Activated naive CD4-positive, alpha-beta T cell treated with anti-CD3 and anti-CD28 coated beads for 36 hours (primary cell): ENCODE measurements at regions of chr6 and their contacts with region 1.

Region 1: DNA sequence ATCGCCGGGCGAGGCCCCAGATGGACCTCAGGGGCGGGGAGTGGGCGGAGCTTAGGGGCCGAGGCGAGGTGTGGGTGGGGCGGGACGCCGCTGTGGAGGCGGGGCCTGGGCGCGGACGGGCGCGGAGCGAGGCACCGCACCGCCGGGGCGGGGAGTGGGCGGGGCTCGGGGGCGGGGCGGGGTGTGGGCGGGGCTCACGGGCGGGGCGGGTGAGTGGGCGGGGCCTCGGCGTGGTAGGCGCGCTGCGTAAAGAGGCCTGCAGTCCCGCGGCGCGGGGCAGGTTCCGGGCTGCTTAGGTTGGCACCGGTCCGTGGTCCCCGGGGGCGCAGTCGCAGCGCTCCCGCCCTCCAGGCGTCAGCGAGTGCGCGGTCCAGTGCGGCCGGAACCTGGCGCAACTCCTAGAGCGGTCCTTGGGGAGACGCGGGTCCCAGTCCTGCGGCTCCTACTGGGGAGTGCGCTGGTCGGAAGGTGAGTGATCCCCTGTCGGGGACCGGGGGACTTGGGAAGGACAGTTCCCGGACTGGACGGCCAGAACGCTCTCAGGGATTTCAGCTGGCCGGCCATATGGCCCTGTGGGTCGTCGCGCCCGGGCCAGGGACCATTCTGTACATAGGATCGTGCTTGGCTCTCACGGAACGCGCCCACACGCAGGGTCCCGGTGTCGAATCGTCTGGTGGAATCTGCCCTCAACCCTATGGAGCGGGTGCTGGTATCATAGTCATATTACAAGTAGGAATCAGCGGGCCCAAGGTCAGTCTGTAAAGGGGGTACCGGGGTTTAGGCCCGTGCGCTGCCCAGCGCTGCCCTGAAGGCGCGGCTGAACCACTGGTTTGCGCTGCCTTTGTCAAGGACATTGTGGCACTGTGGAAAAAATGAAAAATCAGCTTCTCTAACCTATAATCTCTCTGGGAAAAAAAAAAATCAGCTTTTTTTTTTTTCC is at the start of gene NQO2:
- DNase-seq: peak; percentile 91
- H3K4me3 Mint-ChIP-seq: peak within 1 kb of the TSS; percentile 82
- H3K27ac Mint-ChIP-seq: peak within 1 kb of the TSS; percentile 82
- H3K4me1 Mint-ChIP-seq: peaks cover 16% of the 10 kb centered on the region
- H3K27me3 Mint-ChIP-seq: no peaks in the 10 kb centered on the region
- total RNA-seq, gene NQO2: 18.8 to 21.1 TPM

Region 2: GRCh38 chr6:3023663-3024483 is 24.0 kb after region 1 on chr6:
- CTCF ChIA-PET with region 1: interaction called, 8 read pairs
- intact Hi-C with region 1: loop called (anchors 1 kb)
- DNase-seq: peak; percentile 93
- H3K4me3 Mint-ChIP-seq: peak overlapping the region; percentile 84
- H3K27ac Mint-ChIP-seq: peak overlapping the region; percentile 80
- H3K4me1 Mint-ChIP-seq: peaks cover 57% of the 10 kb centered on the region
- H3K27me3 Mint-ChIP-seq: no peaks in the 10 kb centered on the region

Region 3: DNA sequence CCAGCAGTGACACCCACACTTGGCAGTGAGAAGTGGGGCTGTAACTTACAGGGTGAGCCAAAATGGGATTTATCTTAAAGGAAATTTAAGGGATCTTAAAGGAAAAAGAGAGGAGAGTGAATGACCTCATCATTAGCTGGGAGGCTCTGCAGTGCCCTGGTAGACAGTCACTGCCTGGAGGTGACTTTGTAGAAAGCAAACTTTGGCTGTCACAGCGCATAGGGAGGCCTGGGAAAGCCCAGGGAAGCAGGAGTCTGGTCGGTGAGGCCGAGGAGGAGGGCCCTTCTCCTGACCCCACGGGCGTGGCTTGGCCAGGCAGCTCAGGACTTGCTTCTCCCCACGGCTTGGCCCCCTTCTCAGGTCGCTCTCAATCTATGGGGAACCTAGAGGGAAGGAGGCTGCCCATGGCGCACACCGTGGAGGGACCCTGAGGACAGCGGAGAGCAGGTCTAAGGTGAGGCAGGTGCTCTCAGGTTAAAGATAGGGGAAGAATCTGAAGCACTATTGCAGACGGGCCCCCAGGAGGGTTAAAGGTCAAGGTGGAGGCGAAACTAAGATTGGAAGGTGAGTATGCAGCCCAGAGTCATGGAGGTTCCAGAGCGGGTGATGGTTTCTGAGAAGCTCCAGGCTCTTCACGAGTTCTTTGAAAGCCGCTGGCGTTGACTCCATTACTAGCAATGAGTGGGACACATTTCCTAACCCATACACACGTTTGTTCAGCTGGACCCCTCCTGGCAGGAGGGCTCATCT is 52.8 kb after region 1 on chr6:
- CTCF ChIA-PET with region 1: interaction called, 10 read pairs
- intact Hi-C with region 1: loop called (anchors 1 kb)
- DNase-seq: no peak
- H3K4me3 Mint-ChIP-seq: peak overlapping the region; percentile 74
- H3K27ac Mint-ChIP-seq: no peak overlapping the region
- H3K4me1 Mint-ChIP-seq: peaks cover 17% of the 10 kb centered on the region
- H3K27me3 Mint-ChIP-seq: no peaks in the 10 kb centered on the region

Region 4: GRCh38 chr6:3068329-3069214 is 68.7 kb after region 1 on chr6 and contains the start of gene RIPK1:
- CTCF ChIA-PET with region 1: interaction called, 5 read pairs
- intact Hi-C with region 1: loop called (anchors 1 kb)
- DNase-seq: peak; percentile 95
- H3K4me3 Mint-ChIP-seq: peak within 1 kb of the TSS; percentile 92
- H3K27ac Mint-ChIP-seq: peak within 1 kb of the TSS; percentile 97
- H3K4me1 Mint-ChIP-seq: peaks cover 49% of the 10 kb centered on the region
- H3K27me3 Mint-ChIP-seq: no peaks in the 10 kb centered on the region
- total RNA-seq, gene RIPK1: 8.8 to 10.1 TPM

Region 5: DNA sequence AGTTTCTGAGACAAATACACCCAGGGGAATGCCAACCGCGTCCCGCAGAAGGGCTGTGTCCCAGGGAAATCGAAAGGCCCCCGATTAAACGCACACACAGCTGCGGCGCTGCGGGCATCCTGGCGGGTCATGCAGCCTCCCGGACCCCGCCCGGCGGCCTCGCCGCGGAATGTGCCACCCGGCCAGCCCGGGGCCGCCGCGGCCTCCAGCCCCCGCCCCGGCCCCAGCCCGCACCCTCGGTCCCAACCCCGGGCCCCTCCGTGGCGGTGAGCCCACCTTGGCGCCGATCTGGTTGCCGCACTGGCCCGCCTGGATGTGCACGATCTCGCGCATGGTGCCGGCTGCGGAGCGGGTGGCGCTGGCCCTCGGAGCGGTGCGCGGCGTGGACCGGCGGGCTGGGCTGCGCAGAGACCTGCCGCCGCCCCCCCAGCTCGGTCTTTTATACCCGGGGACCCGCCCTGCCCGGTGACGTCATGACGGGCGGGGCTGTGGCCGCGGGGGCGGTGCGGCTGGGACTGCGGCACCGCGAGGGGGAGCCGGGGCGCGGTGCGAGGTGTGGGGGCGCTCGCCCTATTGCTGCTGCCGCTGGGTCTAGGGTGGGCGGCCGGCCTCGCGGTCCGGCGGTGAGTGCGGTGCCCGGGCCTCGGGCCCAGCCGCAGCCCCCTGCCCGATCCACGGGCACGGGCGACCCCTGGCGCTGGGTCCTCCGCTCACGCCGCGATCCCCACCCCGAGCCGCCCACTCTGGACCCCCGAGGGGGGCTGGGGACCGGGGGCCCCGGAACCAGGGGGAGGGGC is 157.4 kb after region 1 on chr6 and contains the start of gene TUBB2A:
- CTCF ChIA-PET with region 1: no interaction called
- intact Hi-C with region 1: loop called (anchors 1 kb)
- DNase-seq: peak; percentile 78
- H3K4me3 Mint-ChIP-seq: peak within 1 kb of the TSS; percentile 74
- H3K27ac Mint-ChIP-seq: no peak within 1 kb of the TSS
- H3K4me1 Mint-ChIP-seq: peaks cover 18% of the 10 kb centered on the region
- H3K27me3 Mint-ChIP-seq: peaks cover 18% of the 10 kb centered on the region
- total RNA-seq, gene TUBB2A: 1.0 to 1.2 TPM

Region 6: GRCh38 chr6:3258720-3259490 is 259.0 kb after region 1 on chr6 and contains the start of gene PSMG4:
- CTCF ChIA-PET with region 1: no interaction called
- intact Hi-C with region 1: loop called (anchors 2 kb)
- DNase-seq: peak; percentile 94
- H3K4me3 Mint-ChIP-seq: peak within 1 kb of the TSS; percentile 94
- H3K27ac Mint-ChIP-seq: peak within 1 kb of the TSS; percentile 87
- H3K4me1 Mint-ChIP-seq: peaks cover 35% of the 10 kb centered on the region
- H3K27me3 Mint-ChIP-seq: no peaks in the 10 kb centered on the region
- total RNA-seq, gene PSMG4: 23.9 to 26.2 TPM

Region 7: DNA sequence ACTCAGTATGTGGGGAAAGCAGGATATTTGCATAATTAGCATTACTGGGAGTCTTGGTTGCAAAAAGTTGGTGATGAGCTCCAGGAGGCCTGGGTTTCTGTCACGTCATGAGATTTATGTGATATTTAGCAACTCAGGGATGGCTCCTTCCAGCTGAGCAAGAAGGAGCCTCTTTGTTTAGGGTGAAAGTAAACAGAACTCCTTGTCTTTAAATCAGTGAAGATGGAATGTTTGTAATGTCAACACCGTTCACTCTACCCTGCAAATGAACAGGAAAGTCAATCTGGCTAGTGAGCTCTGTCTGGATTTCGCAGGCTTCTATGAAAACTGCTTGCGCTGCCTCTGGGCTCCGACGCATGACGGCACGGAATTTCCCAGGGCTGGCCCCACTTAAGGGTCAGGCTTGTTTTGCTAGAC is 664.7 kb after region 1 on chr6:
- CTCF ChIA-PET with region 1: no interaction called
- intact Hi-C with region 1: no loop called
- DNase-seq: no peak
- H3K4me3 Mint-ChIP-seq: no peak overlapping the region
- H3K27ac Mint-ChIP-seq: no peak overlapping the region
- H3K4me1 Mint-ChIP-seq: no peaks in the 10 kb centered on the region
- H3K27me3 Mint-ChIP-seq: no peaks in the 10 kb centered on the region

Region 8: DNA sequence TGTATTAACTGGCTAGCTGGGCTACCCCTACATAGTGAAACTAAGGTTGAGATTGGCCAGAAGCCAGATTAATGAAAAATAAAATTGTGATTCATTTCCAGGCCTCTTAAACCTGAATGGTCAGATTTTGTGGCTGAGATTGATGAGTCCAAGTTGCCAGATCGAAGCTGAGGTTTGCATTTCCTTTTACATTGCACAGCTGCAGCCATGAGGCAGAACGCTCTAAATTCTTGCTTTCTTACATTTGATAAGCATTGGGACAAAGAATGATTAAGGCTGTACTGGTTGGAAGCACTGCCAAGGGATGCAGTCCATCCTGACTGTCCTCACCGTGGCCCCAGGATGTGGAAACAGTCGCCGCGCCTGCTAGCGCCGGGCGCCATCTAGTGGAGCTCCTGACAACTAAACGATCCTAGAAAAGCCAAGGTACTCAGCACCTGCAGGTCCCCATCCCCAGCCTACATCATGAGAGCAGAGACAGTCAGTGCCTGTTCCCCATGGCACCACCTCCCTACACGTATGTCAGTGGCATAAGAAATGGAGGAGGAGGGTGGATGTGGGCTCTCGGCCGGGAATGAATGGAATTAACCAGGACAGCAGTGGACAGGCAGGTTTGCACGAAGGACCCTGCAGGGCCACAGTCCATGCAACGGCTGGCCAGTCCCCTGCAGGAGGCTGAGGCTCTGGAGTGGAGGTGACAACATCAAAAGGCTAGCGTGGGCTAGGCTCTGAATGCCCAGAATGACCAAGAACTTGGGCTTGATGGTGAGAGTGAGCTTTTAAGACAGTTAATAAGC is 732.7 kb after region 1 on chr6:
- CTCF ChIA-PET with region 1: no interaction called
- intact Hi-C with region 1: loop called (anchors 2 kb)
- DNase-seq: peak; percentile 75
- H3K4me3 Mint-ChIP-seq: no peak overlapping the region
- H3K27ac Mint-ChIP-seq: no peak overlapping the region
- H3K4me1 Mint-ChIP-seq: peaks cover 2% of the 10 kb centered on the region
- H3K27me3 Mint-ChIP-seq: peaks cover 3% of the 10 kb centered on the region